BJ (cell line): ENCODE measurements at regions of chr2 and their contacts with region 1.

Region 1: GRCh38 chr2:27703638-27704341 is 40.1 kb downstream of the SLC4A1AP start:
- DNase-seq: peak; percentile 94
- H3K4me3 ChIP-seq: no peak overlapping the region
- H3K27me3 ChIP-seq: no peaks in the 10 kb centered on the region
- CTCF ChIP-seq: peak; percentile 91

Region 2: DNA sequence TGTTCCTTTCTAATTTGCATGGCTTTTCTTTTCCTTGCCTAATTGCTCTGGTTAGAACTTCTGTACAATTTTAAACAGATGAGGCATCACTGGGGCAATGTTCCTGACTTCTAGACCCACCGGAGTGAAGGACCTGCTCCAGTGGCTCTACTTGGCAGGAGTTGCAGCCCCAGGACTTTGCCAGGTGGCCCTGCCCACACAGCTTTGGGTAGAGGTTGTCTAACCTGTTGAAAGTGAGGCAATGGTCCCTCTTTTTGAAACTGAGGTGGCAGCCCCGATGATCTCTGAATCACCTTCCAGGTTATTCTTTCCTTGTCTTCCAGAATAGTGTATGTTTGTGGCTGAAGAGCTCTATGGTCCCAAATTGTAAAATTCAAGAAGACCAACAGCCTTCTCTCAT is 150.8 kb before region 1 on chr2:
- CTCF ChIA-PET with region 1: no interaction called
- POLR2A ChIA-PET with region 1: no interaction called
- DNase-seq: no peak
- H3K4me3 ChIP-seq: no peak overlapping the region
- H3K27me3 ChIP-seq: peaks cover 5% of the 10 kb centered on the region
- CTCF ChIP-seq: no peak

Region 3: GRCh38 chr2:27683390-27684071 is 20.3 kb before region 1 on chr2:
- CTCF ChIA-PET with region 1: interaction called, 28 read pairs
- POLR2A ChIA-PET with region 1: no interaction called
- DNase-seq: peak; percentile 54
- H3K4me3 ChIP-seq: no peak overlapping the region
- H3K27me3 ChIP-seq: no peaks in the 10 kb centered on the region; the same call in 1 of the 2 replicates
- CTCF ChIP-seq: peak; percentile 83

Region 4: GRCh38 chr2:27689424-27689823 is 14.4 kb before region 1 on chr2:
- CTCF ChIA-PET with region 1: interaction called, 28 read pairs
- POLR2A ChIA-PET with region 1: no interaction called
- DNase-seq: no peak
- H3K4me3 ChIP-seq: no peak overlapping the region
- H3K27me3 ChIP-seq: no peaks in the 10 kb centered on the region; the same call in 1 of the 2 replicates
- CTCF ChIP-seq: no peak

Region 5: DNA sequence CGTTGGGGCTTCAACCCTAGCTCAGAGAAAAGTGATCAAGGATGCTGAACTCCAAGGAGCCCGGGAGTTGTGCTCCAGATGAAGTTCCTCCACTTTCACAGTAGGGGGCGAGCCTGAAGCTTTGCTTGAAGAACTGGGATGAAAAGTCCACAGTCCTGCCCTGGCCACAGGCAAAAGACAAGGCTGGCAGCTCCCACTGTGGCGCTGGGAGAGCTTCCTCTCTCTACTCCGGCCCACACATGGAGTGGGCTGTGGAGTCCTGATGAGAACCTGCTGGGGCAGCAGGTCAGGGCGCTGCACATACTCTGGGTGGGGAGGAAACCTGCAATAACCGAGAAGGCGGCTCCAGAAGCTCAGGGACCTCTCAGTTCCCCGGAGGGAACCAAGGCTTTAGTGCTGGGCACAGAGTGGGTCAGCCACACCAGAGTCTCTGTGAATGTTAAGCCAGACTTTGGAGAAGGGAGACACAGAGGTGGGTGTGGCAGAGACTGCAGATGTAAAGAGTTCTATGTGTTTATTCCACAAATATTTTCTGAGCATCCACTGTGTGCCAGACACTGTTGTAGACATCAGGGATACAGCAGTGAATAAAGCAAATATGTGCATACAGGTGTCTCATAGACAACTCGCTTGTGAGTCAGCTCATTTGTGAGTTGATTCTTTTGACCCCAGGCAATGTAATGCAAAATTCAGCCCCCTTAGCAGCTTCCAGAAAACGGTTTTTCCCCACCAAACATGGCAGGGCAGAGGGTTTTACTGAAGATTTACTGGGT is 19.8 kb after region 1 on chr2:
- CTCF ChIA-PET with region 1: interaction called, 12 read pairs
- POLR2A ChIA-PET with region 1: interaction called, 5 read pairs
- DNase-seq: no peak
- H3K4me3 ChIP-seq: no peak overlapping the region
- H3K27me3 ChIP-seq: no peaks in the 10 kb centered on the region
- CTCF ChIP-seq: peak; percentile 89

Region 6: DNA sequence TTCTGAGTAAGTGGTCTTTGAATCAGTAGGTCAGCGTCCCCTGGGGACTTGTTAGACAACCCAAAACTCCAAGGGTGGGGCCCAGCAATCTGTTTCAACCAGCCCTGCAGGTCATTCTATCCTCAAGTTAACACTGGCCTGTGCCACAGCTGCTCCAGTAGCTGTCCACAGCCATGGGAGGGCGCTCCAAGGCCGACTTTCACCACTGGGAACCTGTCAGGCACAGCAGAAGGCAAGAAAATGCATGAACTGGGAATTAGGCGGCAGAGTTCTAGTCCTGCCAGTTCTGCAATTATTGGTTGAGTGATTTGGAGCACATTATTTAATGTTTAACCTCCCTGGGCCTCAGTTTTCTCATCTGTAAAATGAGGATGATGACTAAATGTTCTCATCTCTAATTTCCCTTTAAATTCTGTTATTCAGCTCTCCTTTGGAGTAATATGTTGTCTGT is 50.4 kb after region 1 on chr2:
- CTCF ChIA-PET with region 1: interaction called, 18 read pairs
- POLR2A ChIA-PET with region 1: no interaction called
- DNase-seq: no peak
- H3K4me3 ChIP-seq: no peak overlapping the region
- H3K27me3 ChIP-seq: no peaks in the 10 kb centered on the region
- CTCF ChIP-seq: peak; percentile 98

Region 7: GRCh38 chr2:28452534-28453081 is 748.8 kb after region 1 on chr2:
- CTCF ChIA-PET with region 1: interaction called, 15 read pairs
- POLR2A ChIA-PET with region 1: interaction called, 3 read pairs
- DNase-seq: no peak
- H3K4me3 ChIP-seq: no peak overlapping the region
- H3K27me3 ChIP-seq: no peaks in the 10 kb centered on the region
- CTCF ChIP-seq: peak; percentile 97

Region 8: GRCh38 chr2:28552045-28552823 is 848.4 kb after region 1 on chr2:
- CTCF ChIA-PET with region 1: no interaction called
- POLR2A ChIA-PET with region 1: no interaction called
- DNase-seq: no peak
- H3K4me3 ChIP-seq: no peak overlapping the region
- H3K27me3 ChIP-seq: peaks cover 5% of the 10 kb centered on the region
- CTCF ChIP-seq: no peak